Gastrocnemius medialis (tissue), 4 donors: ENCODE measurements at regions of chr1 and their contacts with region 1.

Region 1: DNA sequence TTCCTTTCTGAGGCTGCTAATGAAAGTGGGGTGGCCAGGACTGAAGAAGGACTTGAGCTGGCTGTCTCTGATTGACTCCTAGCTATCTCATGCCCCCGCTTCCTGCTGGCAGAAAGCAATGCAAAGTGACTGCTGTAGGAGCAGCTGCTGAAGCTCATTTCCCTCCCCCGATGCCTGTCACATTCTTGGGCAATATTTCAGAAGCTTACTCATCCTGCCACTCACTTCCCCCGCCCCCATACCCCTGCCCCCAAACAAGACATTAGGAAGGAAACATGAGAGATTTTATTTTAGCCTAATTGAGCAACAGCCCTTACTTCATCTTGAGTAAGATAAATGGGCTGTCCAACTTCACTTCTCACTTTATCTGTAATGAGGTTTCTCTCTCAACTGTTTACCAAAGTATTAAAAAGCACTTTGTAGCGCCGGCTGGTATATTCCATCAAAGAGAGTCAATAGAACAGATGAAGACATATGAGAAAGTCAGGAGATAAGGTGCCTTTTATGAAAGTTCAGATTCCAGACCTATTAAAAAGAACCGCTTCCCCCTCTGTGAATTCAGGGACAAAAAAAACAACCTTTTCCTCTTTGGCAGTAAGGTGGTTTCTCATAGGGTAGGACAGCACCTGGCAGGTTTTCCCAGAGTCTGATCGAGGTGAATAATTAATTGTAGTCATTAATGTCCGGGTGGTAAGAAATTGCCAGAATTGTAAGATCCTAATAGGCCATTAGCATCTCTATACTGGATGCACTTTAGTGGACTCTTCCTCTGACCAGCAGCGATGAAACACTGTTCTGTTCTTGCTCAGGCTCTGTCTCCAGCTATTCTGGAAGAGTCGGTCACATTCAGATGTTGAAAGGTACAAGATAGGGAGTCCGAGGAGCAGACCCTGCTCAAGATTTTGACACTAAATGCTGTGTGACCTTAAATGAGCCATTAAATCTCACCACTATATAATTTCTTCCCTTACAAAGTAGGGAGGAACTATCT is 70.2 kb downstream of the SH3GLB1 start:
- DNase-seq: peak; percentile 85 to 95
- ATAC-seq: peak; percentile 93 to 95
- H3K4me3 ChIP-seq: peak overlapping the region; percentile 2 to 31 (median 22)
- H3K27ac ChIP-seq: peak overlapping the region; percentile 86 to 94 (median 90)
- H3K4me1 ChIP-seq: peaks cover 32 to 44% of the 10 kb centered on the region in 2 donors
- H3K27me3 ChIP-seq: no peaks in the 10 kb centered on the region
- CTCF ChIP-seq: no peak
- POLR2A ChIP-seq: peak; percentile 53 to 70

Region 2: DNA sequence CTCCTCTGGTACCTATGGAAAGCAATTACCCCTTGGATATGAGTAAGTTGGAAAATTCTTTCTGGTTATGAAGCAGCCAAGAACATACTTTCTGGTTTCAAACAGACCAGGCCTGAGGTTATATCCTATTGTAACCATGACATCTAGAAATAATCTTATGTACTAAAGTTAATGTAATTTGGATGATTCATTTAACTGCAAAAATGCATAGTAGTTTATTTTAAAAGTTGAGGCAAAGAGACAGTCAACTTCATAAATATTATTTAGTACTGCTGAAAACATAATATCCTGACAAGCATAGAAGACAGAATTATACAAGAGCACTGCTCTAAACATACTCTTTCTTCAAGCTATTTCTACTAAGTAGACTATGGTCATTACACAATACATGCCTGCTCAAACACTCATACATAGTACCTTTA is 404.0 kb before region 1 on chr1:
- in situ Hi-C with region 1: no loop called
- intact Hi-C with region 1: no loop called
- DNase-seq: no peak
- ATAC-seq: no peak
- H3K4me3 ChIP-seq: no peak overlapping the region
- H3K27ac ChIP-seq: no peak overlapping the region
- H3K4me1 ChIP-seq: no peaks in the 10 kb centered on the region
- H3K27me3 ChIP-seq: no peaks in the 10 kb centered on the region
- CTCF ChIP-seq: no peak
- POLR2A ChIP-seq: no peak

Region 3: DNA sequence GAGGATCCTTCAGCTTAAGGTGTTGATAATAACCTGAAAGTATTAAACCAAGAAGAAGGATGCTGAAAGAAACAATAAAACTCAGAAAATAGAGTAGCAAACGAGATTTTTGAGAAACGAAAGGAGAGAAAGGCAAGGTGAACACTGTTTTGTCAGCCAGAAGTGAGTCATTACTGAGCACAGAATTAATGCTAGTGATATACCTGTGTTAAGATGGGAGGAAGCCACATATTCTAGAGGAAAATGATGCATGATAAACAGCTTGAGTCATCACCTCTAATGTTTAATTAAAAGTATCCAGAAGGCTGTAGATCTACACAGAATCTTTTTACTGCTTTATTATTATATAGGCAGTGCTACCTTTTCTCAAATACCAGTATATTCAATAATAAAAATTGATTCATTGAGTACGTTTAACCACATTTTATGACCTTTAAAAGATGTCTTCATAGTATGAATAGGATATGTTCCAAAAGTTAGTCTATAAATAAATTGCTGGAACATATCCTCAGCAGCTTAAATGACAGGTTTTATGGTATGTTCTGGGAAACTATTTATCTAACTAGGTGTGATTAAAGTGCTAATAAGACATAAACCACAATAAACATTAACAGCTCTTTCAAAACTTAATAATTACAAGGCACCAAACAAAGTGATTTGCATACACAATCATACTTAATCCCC is 59.9 kb before region 1 on chr1:
- in situ Hi-C with region 1: no loop called
- intact Hi-C with region 1: loop called (anchors 5 kb)
- DNase-seq: no peak
- ATAC-seq: peak; percentile 68 to 69
- H3K4me3 ChIP-seq: peak overlapping the region in 3 of 4 donors; percentile 6 to 27 (median 20)
- H3K27ac ChIP-seq: peak overlapping the region; percentile 91 to 98 (median 97)
- H3K4me1 ChIP-seq: peaks cover 86 to 99% of the 10 kb centered on the region in 2 donors
- H3K27me3 ChIP-seq: no peaks in the 10 kb centered on the region
- CTCF ChIP-seq: no peak
- POLR2A ChIP-seq: no peak

Region 4: GRCh38 chr1:86913896-86914634 is 139.5 kb after region 1 on chr1 and contains the start of gene SELENOF:
- in situ Hi-C with region 1: no loop called
- intact Hi-C with region 1: loop called (anchors 2 kb)
- DNase-seq: peak; percentile 98 to 100
- ATAC-seq: peak; percentile 97 to 98
- H3K4me3 ChIP-seq: peak within 1 kb of the TSS; percentile 76 to 99 (median 88)
- H3K27ac ChIP-seq: peak within 1 kb of the TSS; percentile 86 to 97 (median 90)
- H3K4me1 ChIP-seq: peaks cover 19 to 40% of the 10 kb centered on the region in 2 donors
- H3K27me3 ChIP-seq: no peaks in the 10 kb centered on the region
- CTCF ChIP-seq: peak in 1 of 5 experiments; percentile 23
- POLR2A ChIP-seq: peak; percentile 18 to 86
- total RNA-seq, gene SELENOF: 41.3 to 66.8 (median 47.2) TPM